ENCODE measurements at regions of chrX and their contacts with region 1.

Region 1: DNA sequence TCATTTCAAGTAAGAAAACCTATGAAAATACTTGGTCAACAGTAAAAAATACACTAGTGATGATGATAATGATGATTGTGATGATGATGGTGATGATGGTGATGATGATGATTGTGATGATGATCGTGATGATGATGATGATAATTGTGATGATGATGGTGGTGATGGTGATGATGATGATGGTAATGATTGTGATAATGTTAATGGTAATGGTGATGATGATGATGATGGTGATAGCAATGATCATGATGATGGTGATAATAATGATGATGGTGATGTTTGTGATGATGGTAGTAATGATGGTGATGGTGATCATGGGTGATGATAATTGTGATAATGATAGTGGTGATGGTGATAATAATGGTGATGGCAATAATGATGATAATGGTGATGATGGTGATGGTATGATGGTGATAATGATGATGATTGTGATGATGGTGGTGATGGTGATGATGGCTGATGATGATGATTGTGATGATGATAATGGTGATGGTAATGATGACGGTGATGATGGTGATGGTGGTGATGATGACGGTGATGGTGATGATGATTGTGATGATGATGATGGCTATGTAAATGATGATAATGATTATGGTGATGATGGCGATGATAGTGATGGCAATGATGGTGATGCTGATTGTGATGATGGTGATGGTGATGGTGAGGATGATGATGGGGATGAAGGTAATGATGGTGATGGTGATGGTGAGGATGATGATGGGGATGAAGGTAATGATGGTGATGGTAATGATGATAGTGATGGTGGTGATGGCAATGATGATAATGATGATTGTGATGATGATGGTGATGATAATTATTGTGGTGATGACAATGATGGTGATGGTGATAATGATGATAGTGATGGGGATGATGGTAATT is 62.0 kb downstream of the VCX3A start:
- DNase-seq: no peak
- H3K4me3 ChIP-seq: no peak overlapping the region
- H3K27me3 ChIP-seq: no peaks in the 10 kb centered on the region
- CTCF ChIP-seq: no peak

Region 2: DNA sequence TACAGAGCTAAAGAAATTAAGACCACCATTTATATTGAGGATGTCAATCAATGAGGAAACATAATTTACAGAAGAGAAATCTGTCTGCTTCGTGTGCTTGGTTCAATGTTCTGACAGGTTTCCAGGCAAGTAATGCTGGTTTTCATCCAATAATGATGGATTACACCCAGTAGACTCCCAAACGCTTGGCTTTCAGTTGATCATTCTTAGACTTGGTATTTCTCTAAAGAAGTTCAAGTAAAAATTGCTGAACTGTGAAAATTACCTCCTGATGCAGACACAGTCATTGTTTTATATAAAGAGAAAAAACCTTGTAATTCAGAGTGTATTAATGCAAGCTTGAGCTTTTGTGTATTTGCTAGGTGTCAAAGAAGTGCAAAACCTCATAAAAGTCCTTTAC is 22.9 kb before region 1 on chrX:
- CTCF ChIA-PET with region 1: no interaction called
- POLR2A ChIA-PET with region 1: interaction called, 13 read pairs
- DNase-seq: no peak
- H3K4me3 ChIP-seq: no peak overlapping the region
- H3K27me3 ChIP-seq: no peaks in the 10 kb centered on the region
- CTCF ChIP-seq: no peak